ENCODE measurements at regions of chr1 and their contacts with region 1.

Region 1: GRCh38 chr1:115052454-115053083 is 22.9 kb downstream of the TSHB start:
- DNase-seq: peak; percentile 80
- H3K4me3 Mint-ChIP-seq: no peak overlapping the region
- H3K27ac Mint-ChIP-seq: no peak overlapping the region
- H3K4me1 Mint-ChIP-seq: no peaks in the 10 kb centered on the region
- H3K27me3 Mint-ChIP-seq: peaks cover 18% of the 10 kb centered on the region
- CTCF ChIP-seq: peak; percentile 82

Region 2: GRCh38 chr1:114794038-114794437 is 258.5 kb before region 1 on chr1:
- CTCF ChIA-PET with region 1: no interaction called
- POLR2A ChIA-PET with region 1: no interaction called
- intact Hi-C with region 1: no loop called
- DNase-seq: no peak
- H3K4me3 Mint-ChIP-seq: no peak overlapping the region
- H3K27ac Mint-ChIP-seq: no peak overlapping the region
- H3K4me1 Mint-ChIP-seq: no peaks in the 10 kb centered on the region
- H3K27me3 Mint-ChIP-seq: peaks cover 66% of the 10 kb centered on the region
- CTCF ChIP-seq: no peak

Region 3: DNA sequence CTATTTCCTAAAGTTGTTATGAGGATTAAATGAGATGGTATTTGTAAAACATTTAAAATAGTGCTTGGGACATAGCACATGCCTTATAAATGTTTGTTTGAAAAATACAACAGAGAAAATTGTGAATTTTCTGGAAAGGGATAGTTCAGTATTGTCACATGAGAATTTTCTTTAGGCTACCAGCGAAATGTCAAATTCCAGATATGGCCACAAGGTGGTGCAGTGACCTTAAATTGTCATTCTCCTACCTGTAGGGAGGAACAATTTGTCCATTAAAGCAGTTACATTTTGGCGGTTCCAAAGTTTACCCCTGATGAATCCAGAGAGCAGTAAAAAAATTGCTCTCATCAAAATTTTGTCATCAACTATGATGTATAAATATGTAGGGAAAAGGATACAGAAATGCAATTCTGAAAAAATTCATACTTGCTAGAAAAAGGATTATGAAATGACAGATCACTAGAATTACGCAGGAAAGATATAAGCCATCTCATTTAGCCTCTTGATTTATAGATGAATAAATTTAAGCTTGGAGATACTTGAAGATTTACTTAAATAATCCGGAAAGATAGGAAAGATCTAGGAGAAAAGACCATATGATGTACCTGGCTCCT is 73.2 kb before region 1 on chr1:
- CTCF ChIA-PET with region 1: interaction called, 33 read pairs
- POLR2A ChIA-PET with region 1: interaction called, 3 read pairs
- intact Hi-C with region 1: loop called (anchors 1 kb)
- DNase-seq: peak; percentile 71
- H3K4me3 Mint-ChIP-seq: no peak overlapping the region
- H3K27ac Mint-ChIP-seq: no peak overlapping the region
- H3K4me1 Mint-ChIP-seq: no peaks in the 10 kb centered on the region
- H3K27me3 Mint-ChIP-seq: peaks cover 64% of the 10 kb centered on the region
- CTCF ChIP-seq: peak; percentile 66

Region 4: GRCh38 chr1:114986286-114986685 is 66.3 kb before region 1 on chr1:
- CTCF ChIA-PET with region 1: interaction called, 33 read pairs
- POLR2A ChIA-PET with region 1: interaction called, 7 read pairs
- intact Hi-C with region 1: no loop called
- DNase-seq: peak; percentile 50
- H3K4me3 Mint-ChIP-seq: no peak overlapping the region
- H3K27ac Mint-ChIP-seq: no peak overlapping the region
- H3K4me1 Mint-ChIP-seq: no peaks in the 10 kb centered on the region
- H3K27me3 Mint-ChIP-seq: peaks cover 41% of the 10 kb centered on the region
- CTCF ChIP-seq: no peak

Region 5: DNA sequence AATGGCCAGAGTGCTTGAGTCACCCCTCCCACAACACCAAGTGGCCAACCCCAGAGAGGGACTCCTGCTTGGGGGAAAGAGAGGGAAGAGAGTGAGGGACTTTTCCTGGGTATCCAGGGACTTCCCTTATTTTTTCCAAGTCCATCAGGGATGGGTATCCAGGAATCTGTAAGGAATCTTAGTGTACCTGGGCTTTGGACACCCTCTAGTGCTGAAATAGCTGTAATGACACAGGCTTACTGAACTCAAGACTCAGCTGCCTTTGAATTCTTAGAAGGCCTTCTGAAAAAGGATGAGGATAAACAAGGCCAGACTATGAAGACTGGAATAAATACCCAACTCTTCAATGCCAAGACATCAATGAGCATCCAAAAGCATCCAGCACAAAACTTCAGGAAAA is 10.9 kb before region 1 on chr1:
- CTCF ChIA-PET with region 1: interaction called, 43 read pairs
- POLR2A ChIA-PET with region 1: interaction called, 8 read pairs
- intact Hi-C with region 1: no loop called
- DNase-seq: peak; percentile 51
- H3K4me3 Mint-ChIP-seq: no peak overlapping the region
- H3K27ac Mint-ChIP-seq: no peak overlapping the region
- H3K4me1 Mint-ChIP-seq: no peaks in the 10 kb centered on the region
- H3K27me3 Mint-ChIP-seq: peaks cover 28% of the 10 kb centered on the region
- CTCF ChIP-seq: peak; percentile 39

Region 6: DNA sequence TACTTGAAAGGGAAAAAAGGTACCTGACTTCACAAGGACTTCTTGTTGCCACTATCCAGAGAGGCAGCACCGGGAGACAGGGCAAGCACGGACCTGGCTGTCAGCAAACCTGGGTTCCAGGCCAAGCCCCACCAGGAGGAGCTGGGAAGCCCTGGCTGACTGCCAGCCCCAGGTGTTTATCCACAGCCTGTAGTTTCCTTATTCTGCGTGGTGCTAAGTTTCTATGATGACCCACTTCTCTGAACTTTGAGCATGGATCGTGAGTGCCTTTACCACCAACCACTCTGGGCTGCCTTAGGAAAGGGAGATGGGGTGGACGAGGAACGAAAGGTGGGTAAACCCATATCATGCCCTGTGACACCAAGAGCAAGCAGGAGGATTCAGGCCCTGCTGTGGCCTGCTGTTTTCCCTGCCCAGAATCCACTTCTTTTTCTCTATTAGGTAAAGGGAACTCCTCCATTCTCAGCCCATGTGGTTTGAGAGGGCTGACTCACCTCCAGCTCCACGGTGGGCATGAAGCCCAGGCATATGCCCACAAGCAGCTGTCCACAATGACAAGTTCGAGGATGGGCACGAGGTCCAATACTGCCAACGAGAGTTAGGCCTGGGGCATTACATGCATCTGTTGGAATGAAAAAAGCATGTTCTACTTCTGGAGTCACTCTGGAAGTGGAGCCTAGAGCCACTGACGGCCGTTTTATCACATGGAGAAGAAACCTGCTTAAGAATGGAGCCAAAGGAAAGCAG is 16.4 kb after region 1 on chr1:
- CTCF ChIA-PET with region 1: interaction called, 38 read pairs
- POLR2A ChIA-PET with region 1: interaction called, 5 read pairs
- intact Hi-C with region 1: no loop called
- DNase-seq: peak; percentile 80
- H3K4me3 Mint-ChIP-seq: no peak overlapping the region
- H3K27ac Mint-ChIP-seq: peak overlapping the region; percentile 82
- H3K4me1 Mint-ChIP-seq: peaks cover 33% of the 10 kb centered on the region
- H3K27me3 Mint-ChIP-seq: no peaks in the 10 kb centered on the region
- CTCF ChIP-seq: no peak

Region 7: GRCh38 chr1:115112496-115113375 is 60.2 kb after region 1 on chr1:
- CTCF ChIA-PET with region 1: interaction called, 41 read pairs
- POLR2A ChIA-PET with region 1: interaction called, 8 read pairs
- intact Hi-C with region 1: loop called (anchors 1 kb)
- DNase-seq: peak; percentile 42
- H3K4me3 Mint-ChIP-seq: no peak overlapping the region
- H3K27ac Mint-ChIP-seq: no peak overlapping the region
- H3K4me1 Mint-ChIP-seq: peaks cover 6% of the 10 kb centered on the region
- H3K27me3 Mint-ChIP-seq: no peaks in the 10 kb centered on the region
- CTCF ChIP-seq: peak; percentile 90

Region 8: DNA sequence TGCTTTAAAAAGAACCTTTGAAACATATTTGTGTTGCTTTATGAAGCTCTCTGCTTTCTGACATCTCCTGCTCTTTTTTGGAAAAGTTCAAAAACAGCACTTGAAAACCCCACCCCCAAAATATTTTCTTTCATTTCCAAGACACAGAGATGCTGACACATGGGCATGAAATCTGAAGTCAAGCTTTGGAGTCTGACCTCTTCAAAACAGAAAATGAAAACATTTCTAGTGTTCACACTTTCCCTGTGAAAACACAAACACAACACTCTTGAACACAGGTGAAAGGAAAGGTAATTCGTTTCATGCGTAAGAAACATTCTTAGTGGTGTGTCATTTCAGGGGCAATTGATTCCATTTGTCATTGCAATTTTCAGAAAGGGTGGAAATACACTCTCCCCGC is 274.7 kb after region 1 on chr1:
- CTCF ChIA-PET with region 1: no interaction called
- POLR2A ChIA-PET with region 1: no interaction called
- intact Hi-C with region 1: no loop called
- DNase-seq: no peak
- H3K4me3 Mint-ChIP-seq: no peak overlapping the region
- H3K27ac Mint-ChIP-seq: no peak overlapping the region
- H3K4me1 Mint-ChIP-seq: peaks cover 10% of the 10 kb centered on the region
- H3K27me3 Mint-ChIP-seq: no peaks in the 10 kb centered on the region
- CTCF ChIP-seq: no peak

Region 9: GRCh38 chr1:115595279-115596079 is 542.9 kb after region 1 on chr1:
- CTCF ChIA-PET with region 1: interaction called, 12 read pairs
- POLR2A ChIA-PET with region 1: interaction called, 4 read pairs
- intact Hi-C with region 1: no loop called
- DNase-seq: peak; percentile 92
- H3K4me3 Mint-ChIP-seq: no peak overlapping the region
- H3K27ac Mint-ChIP-seq: no peak overlapping the region
- H3K4me1 Mint-ChIP-seq: no peaks in the 10 kb centered on the region
- H3K27me3 Mint-ChIP-seq: no peaks in the 10 kb centered on the region
- CTCF ChIP-seq: peak; percentile 96